ENCODE measurements at regions of chr5 and their contacts with region 1.

Region 1: DNA sequence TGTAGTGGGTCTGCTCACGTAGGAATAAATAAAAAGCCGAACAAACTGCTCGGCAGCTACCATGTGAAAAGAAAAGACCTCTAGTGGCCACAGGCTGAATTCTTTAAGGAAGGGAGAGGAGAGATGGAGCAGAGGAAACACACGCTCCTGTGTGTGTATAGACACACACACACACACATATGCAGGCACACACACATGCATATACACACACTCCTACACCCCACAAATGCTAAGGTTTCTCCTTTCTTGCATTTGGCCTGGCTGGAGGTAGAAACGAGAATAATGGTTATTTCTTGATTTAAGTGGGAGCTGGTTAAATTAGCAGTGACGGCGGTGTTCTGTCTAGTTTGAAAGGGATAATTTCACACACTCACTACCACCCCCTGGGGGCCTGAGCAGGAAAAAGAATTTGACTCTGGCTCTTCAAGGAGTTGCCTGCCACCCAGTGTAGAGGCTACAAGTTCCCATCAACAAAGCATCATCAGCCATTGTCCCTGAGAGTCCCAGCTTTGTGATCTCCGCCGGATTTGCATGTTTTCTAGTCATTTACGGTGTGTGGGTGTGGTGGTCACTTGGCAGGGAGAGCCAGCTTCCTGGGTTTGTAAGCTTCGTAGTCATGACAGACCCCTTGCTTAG is at the start of gene INSYN2B:
- DNase-seq: peak; percentile 83
- H3K4me3 ChIP-seq: peak within 1 kb of the TSS; percentile 51 to 85 (median 77)
- H3K27ac ChIP-seq: peak within 1 kb of the TSS; percentile 93
- H3K4me1 ChIP-seq: peaks cover 38% of the 10 kb centered on the region
- H3K27me3 ChIP-seq: no peaks in the 10 kb centered on the region
- CTCF ChIP-seq: peak; percentile 57 to 74
- total RNA-seq, gene INSYN2B: 2.0 to 8.7 TPM

Region 2: DNA sequence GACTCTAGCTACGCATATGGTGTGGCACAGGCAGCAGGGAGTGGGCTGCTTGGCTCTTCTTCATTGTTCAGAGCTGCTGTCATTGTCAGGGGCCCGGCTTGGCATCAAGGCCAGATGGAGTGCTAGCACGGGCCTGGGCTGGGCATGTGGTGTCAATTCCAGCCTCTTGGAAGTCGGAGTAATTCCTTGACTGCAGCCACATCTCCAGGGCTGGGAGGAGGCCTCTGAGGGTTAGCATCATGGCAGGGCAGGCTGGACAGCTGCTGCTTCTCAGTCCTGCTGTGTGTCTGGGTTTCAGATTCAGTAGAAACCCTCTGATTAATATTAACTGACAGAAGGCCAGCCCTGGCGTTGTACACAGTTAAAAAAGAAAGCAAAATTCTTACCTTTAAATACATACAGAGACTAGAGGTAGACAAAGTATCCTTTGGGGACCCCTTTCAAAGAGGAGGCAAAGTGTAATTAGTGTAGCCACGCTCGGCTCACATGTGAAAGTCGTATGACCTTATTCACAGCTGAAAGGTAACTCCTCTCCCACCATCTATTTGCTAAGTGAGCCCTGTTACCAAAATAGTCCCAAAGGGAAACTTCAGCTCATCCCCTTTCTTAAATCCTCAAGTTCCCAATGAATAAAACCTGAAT is 217.0 kb before region 1 on chr5:
- CTCF ChIA-PET with region 1: no interaction called
- dilution Hi-C with region 1: no loop called
- in situ Hi-C with region 1: no loop called
- intact Hi-C with region 1: loop called (anchors 1 kb)
- DNase-seq: no peak
- H3K4me3 ChIP-seq: no peak overlapping the region
- H3K27ac ChIP-seq: no peak overlapping the region
- H3K4me1 ChIP-seq: peaks cover 35% of the 10 kb centered on the region
- H3K27me3 ChIP-seq: no peaks in the 10 kb centered on the region
- CTCF ChIP-seq: no peak

Region 3: GRCh38 chr5:169850409-169850808 is 130.1 kb before region 1 on chr5:
- CTCF ChIA-PET with region 1: no interaction called
- dilution Hi-C with region 1: no loop called
- in situ Hi-C with region 1: no loop called
- intact Hi-C with region 1: loop called (anchors 1 kb)
- DNase-seq: no peak
- H3K4me3 ChIP-seq: no peak overlapping the region
- H3K27ac ChIP-seq: no peak overlapping the region
- H3K4me1 ChIP-seq: peaks cover 6% of the 10 kb centered on the region
- H3K27me3 ChIP-seq: no peaks in the 10 kb centered on the region
- CTCF ChIP-seq: peak in 1 of 2 donors; percentile 44

Region 4: DNA sequence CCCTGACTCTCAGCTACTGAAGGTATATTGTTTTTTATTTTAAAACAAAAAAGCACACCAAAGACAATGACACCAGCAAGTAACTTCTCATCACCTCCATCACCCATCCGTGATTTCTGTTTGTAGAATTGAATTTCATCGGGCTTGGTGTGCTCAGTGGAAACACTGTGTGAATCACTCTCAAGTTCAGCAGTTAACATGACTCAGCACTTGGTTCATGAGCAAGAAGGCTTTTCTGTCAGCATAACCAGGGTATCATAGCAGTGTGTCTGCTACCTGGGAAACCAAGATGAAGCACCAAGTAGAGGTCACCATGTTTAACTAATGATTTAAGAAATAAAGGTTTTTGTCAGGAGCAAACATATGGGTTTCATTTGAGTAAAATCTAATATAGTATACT is 124.0 kb before region 1 on chr5:
- CTCF ChIA-PET with region 1: interaction called, 21 read pairs
- dilution Hi-C with region 1: no loop called
- in situ Hi-C with region 1: no loop called
- intact Hi-C with region 1: loop called (anchors 2 kb)
- DNase-seq: peak; percentile 79
- H3K4me3 ChIP-seq: no peak overlapping the region
- H3K27ac ChIP-seq: no peak overlapping the region
- H3K4me1 ChIP-seq: no peaks in the 10 kb centered on the region
- H3K27me3 ChIP-seq: no peaks in the 10 kb centered on the region
- CTCF ChIP-seq: no peak

Region 5: GRCh38 chr5:169914766-169915165 is 65.8 kb before region 1 on chr5:
- CTCF ChIA-PET with region 1: no interaction called
- dilution Hi-C with region 1: no loop called
- in situ Hi-C with region 1: no loop called
- intact Hi-C with region 1: loop called (anchors 1 kb)
- DNase-seq: peak; percentile 13
- H3K4me3 ChIP-seq: no peak overlapping the region
- H3K27ac ChIP-seq: no peak overlapping the region
- H3K4me1 ChIP-seq: no peaks in the 10 kb centered on the region
- H3K27me3 ChIP-seq: no peaks in the 10 kb centered on the region
- CTCF ChIP-seq: no peak

Region 6: DNA sequence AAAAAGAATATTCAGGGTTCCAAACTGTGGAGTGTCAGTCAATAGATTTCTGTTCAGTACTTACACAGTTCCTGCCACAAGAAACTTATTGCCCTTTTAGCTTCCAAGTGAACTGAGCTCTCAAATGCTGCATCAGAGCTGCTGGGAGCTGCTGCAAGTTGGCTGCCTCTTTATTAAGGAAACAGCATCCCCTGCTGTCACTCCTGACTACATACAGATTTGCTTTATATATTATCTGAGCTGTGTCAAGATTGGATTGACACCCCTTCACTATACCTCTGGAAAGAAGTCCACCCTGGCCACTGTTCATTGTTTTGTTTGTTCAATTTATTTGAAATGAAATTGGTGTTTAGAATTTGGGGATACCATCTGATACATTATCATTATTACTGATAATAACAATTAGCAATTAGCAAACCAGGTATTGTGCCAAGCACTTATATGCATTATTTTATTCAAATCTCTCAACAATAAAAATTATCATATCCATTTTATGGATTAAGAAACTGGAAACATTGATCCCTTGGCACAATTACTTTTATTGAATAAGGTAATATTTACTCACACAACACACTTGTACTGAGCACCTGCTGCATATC is 235.8 kb after region 1 on chr5:
- CTCF ChIA-PET with region 1: interaction called, 9 read pairs
- dilution Hi-C with region 1: no loop called
- in situ Hi-C with region 1: no loop called
- intact Hi-C with region 1: loop called (anchors 1 kb)
- DNase-seq: peak; percentile 45
- H3K4me3 ChIP-seq: no peak overlapping the region
- H3K27ac ChIP-seq: no peak overlapping the region
- H3K4me1 ChIP-seq: peaks cover 31% of the 10 kb centered on the region
- H3K27me3 ChIP-seq: no peaks in the 10 kb centered on the region
- CTCF ChIP-seq: peak; percentile 89

Measured in mammary epithelial cell (primary cell).